Heart right ventricle (tissue), 16 donors: ENCODE measurements at regions of chr6 and their contacts with region 1.

Region 1: GRCh38 chr6:116969211-116969863 is 92.3 kb downstream of the RFX6 start:
- DNase-seq: peak in 1 of 2 donors; percentile 11
- ATAC-seq: peak in 1 of 8 donors; percentile 52
- H3K4me3 ChIP-seq: no peak overlapping the region
- H3K27ac ChIP-seq: no peak overlapping the region
- H3K4me1 ChIP-seq: no peaks in the 10 kb centered on the region
- H3K27me3 ChIP-seq: peaks cover 0 to 28% (median 0%) of the 10 kb centered on the region in 7 donors
- CTCF ChIP-seq: peak in 8 of 9 donors; percentile 20 to 72 (median 62)

Region 2: DNA sequence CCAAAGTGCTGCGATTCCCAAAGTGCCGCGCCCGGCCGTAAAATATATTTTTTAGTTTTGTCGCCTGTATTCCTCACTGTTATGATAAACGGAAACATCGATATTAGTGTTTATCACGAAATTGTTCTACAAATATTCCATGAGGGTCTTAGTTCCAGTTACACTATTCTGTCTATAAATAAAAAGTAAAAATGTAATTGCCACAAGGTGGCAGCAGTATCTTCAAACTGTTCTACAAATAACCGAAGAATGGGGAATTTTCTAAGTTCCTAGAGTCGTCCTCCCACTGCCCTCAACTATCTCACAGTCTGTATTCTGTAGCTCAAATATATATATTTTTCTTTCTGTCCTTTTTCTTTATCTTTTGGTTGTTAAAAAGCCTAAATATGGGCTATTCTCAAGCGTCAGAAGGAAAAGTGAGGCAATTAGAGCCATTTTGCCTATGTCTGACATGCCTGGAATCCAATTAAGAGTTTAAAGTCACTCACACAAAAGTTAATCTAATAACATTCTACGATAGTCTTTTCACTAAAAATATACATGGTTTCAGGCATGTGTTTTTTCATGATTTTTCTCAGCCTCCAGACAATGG is 189.7 kb before region 1 on chr6:
- intact Hi-C with region 1: loop called in 3 of 10 experiments (anchors 5 to 10 kb)
- DNase-seq: no peak
- ATAC-seq: no peak
- H3K4me3 ChIP-seq: peak overlapping the region in 1 of 10 donors; percentile 27
- H3K27ac ChIP-seq: no peak overlapping the region
- H3K4me1 ChIP-seq: peaks cover 0 to 6% (median 0%) of the 10 kb centered on the region in 9 donors
- H3K27me3 ChIP-seq: peaks cover 0 to 17% (median 3%) of the 10 kb centered on the region in 7 donors
- CTCF ChIP-seq: peak in 8 of 9 donors; percentile 16 to 66 (median 55)

Region 3: DNA sequence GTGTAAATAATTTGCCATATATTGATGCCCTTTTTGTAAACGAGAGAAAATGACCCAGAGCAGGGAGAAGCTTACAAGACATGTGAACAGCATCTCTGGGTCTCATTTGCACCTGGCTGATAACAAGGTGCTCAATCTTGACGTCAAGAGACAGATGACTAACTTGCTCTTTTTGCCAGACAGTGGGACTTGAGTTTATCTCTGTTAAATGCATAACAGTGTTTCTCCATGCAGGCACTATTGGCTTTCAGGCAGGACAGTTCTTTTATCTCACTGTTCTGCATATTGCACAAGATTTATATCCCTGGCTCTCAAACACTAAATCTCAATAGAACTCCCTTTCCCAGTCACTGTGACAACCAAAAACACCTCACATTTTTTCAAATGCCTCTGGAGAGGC is 35.9 kb before region 1 on chr6:
- intact Hi-C with region 1: no loop called
- DNase-seq: no peak
- ATAC-seq: no peak
- H3K4me3 ChIP-seq: no peak overlapping the region
- H3K27ac ChIP-seq: no peak overlapping the region
- H3K4me1 ChIP-seq: no peaks in the 10 kb centered on the region
- H3K27me3 ChIP-seq: peaks cover 0 to 4% (median 0%) of the 10 kb centered on the region in 7 donors
- CTCF ChIP-seq: no peak

Region 4: DNA sequence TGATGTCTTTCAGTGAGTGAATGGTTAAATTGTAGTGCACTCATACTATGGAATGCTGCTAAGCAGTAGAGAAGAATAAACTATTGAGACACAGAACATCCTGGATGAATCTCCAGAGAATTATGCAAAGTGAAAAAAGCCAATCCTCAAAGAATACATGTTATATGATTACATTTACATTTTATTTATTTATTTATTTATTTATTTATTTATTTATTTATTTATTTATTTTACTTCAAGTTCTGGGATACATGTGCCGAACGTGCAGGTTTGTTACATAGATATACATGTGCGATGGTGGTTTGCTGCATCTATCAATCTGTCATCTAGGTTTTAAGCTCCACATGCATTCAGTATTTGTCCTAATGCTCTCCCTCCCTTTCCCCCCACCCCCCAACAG is 120.3 kb after region 1 on chr6:
- intact Hi-C with region 1: no loop called
- DNase-seq: no peak
- ATAC-seq: no peak
- H3K4me3 ChIP-seq: no peak overlapping the region
- H3K27ac ChIP-seq: no peak overlapping the region
- H3K4me1 ChIP-seq: no peaks in the 10 kb centered on the region
- H3K27me3 ChIP-seq: no peaks in the 10 kb centered on the region
- CTCF ChIP-seq: no peak

Region 5: GRCh38 chr6:117188627-117189201 is 219.4 kb after region 1 on chr6:
- intact Hi-C with region 1: loop called in 8 of 10 experiments (anchors 2 to 10 kb)
- DNase-seq: no peak
- ATAC-seq: no peak
- H3K4me3 ChIP-seq: no peak overlapping the region
- H3K27ac ChIP-seq: no peak overlapping the region
- H3K4me1 ChIP-seq: no peaks in the 10 kb centered on the region
- H3K27me3 ChIP-seq: no peaks in the 10 kb centered on the region
- CTCF ChIP-seq: peak in 8 of 9 donors; percentile 21 to 58 (median 48)

Region 6: GRCh38 chr6:117194978-117195377 is 225.6 kb after region 1 on chr6:
- intact Hi-C with region 1: loop called in 5 of 10 experiments (anchors 5 to 10 kb)
- DNase-seq: no peak
- ATAC-seq: no peak
- H3K4me3 ChIP-seq: no peak overlapping the region
- H3K27ac ChIP-seq: no peak overlapping the region
- H3K4me1 ChIP-seq: peaks cover 0 to 7% (median 0%) of the 10 kb centered on the region in 9 donors
- H3K27me3 ChIP-seq: no peaks in the 10 kb centered on the region
- CTCF ChIP-seq: no peak

Region 7: GRCh38 chr6:117265410-117266256 is 296.3 kb after region 1 on chr6 and contains the start of gene VGLL2:
- intact Hi-C with region 1: loop called in 2 of 10 experiments (anchors 10 kb)
- DNase-seq: peak in 1 of 2 donors; percentile 37
- ATAC-seq: peak; percentile 64 to 88 (median 82)
- H3K4me3 ChIP-seq: peak within 1 kb of the TSS; percentile 0 to 51 (median 44)
- H3K27ac ChIP-seq: peak within 1 kb of the TSS in 1 of 10 donors; percentile 54
- H3K4me1 ChIP-seq: peaks cover 0 to 33% (median 21%) of the 10 kb centered on the region in 9 donors
- H3K27me3 ChIP-seq: peaks cover 25 to 100% (median 99%) of the 10 kb centered on the region in 7 donors
- CTCF ChIP-seq: peak in 3 of 9 donors; percentile 29 to 36 (median 35)
- total RNA-seq, gene VGLL2: 0.21 to 32.4 (median 2.9) TPM in 7 of 10 donors, not detected in the others

Region 8: GRCh38 chr6:117317261-117317660 is 347.9 kb after region 1 on chr6:
- intact Hi-C with region 1: loop called in 9 of 10 experiments (anchors 2 to 10 kb)
- DNase-seq: no peak
- ATAC-seq: no peak
- H3K4me3 ChIP-seq: no peak overlapping the region
- H3K27ac ChIP-seq: no peak overlapping the region
- H3K4me1 ChIP-seq: no peaks in the 10 kb centered on the region
- H3K27me3 ChIP-seq: no peaks in the 10 kb centered on the region
- CTCF ChIP-seq: peak; percentile 15 to 57 (median 36)

Region 9: DNA sequence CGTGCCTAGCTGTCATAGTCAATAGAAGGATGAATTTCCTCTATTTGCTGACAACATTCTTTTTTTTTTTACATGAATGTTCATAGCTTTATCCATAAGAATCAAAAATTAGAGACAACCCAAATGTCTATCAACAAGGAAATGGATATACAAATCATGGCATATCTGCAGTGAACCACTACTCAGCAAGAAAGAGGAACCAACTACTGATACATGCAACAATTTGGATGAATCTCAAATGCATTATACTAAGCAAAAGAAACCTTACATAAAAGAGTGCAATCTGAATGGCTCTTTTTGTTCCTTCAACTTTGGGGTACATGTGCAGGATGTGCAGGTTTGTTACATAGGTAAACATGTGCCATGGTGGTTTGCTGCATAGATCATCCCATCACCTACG is 1983.3 kb after region 1 on chr6:
- intact Hi-C with region 1: no loop called
- DNase-seq: no peak
- ATAC-seq: no peak
- H3K4me3 ChIP-seq: no peak overlapping the region
- H3K27ac ChIP-seq: no peak overlapping the region
- H3K4me1 ChIP-seq: no peaks in the 10 kb centered on the region
- H3K27me3 ChIP-seq: no peaks in the 10 kb centered on the region
- CTCF ChIP-seq: no peak